ENCODE measurements at regions of chrX and their contacts with region 1.

Region 1: DNA sequence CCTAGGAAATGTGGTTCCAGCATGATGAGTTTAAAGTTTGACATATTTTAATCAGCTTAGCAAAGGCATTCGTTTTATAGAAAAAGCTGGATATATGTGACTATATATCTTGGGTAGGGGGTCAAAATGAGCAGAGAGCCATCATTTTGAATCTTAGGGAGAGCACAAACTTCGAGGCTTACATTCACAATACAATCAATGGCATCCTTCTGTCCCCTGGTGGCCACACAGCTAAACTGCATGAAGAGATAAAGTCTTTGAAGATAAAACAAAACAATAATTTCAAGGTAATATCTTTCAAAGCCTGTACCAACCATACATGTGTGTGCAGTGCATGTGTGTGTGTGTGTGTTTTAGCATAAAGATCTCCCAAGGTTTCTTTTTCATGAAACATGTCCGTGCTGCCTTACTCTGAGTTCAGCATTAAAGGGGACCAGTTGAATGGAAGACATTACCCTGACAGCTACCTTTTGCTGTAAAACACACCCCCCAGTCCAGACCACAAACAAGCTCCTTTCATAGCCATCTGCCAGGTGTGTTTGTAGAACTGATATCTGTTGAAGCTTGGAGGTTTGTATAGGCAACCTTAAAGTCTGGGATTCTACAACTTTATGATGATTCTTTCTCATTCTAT is 22.0 kb downstream of the DYNLT3 start:
- DNase-seq: peak; percentile 5 to 73 (median 46)
- ATAC-seq: peak; percentile 65 to 75 (median 71)
- H3K4me3 ChIP-seq: no peak overlapping the region
- H3K4me3 Mint-ChIP-seq: no peak overlapping the region
- H3K27ac ChIP-seq: no peak overlapping the region
- H3K27ac Mint-ChIP-seq: no peak overlapping the region
- H3K4me1 ChIP-seq: peaks cover 0 to 8% of the 10 kb centered on the region in 2 experiments
- H3K4me1 Mint-ChIP-seq: peaks cover 18 to 31% (median 26%) of the 10 kb centered on the region in 3 donors
- H3K27me3 ChIP-seq: no peaks in the 10 kb centered on the region
- H3K27me3 Mint-ChIP-seq: peaks cover 0 to 4% of the 10 kb centered on the region in 2 donors

Region 2: DNA sequence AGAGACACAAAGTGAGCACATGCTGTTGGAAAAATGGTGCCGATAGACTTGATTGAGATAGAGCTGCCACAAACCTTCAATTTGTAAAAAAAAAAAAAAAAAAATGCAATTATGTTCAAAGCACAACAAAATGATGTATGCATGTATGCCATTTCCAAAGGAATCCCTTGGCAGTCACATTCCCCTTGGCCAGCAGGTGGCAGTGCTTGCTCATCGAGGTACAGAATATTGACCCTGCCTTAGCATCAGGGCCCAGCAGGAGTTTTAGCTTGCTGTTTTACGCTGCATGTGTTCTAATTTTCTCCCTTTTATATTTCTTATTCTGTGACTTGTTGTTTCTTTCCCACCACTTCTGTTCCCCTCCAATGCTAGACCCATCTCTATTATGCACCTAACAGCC is 80.0 kb before region 1 on chrX:
- CTCF ChIA-PET with region 1: interaction called, 49 to 77 read pairs
- POLR2A ChIA-PET with region 1: no interaction called
- DNase-seq: peak; percentile 53 to 84 (median 68)
- ATAC-seq: peak; percentile 70 to 91 (median 79)
- H3K4me3 ChIP-seq: no peak overlapping the region
- H3K4me3 Mint-ChIP-seq: no peak overlapping the region
- H3K27ac ChIP-seq: no peak overlapping the region
- H3K27ac Mint-ChIP-seq: no peak overlapping the region
- H3K4me1 ChIP-seq: peaks cover 7 to 12% of the 10 kb centered on the region in 2 experiments
- H3K4me1 Mint-ChIP-seq: peaks cover 9 to 16% (median 11%) of the 10 kb centered on the region in 3 donors
- H3K27me3 ChIP-seq: no peaks in the 10 kb centered on the region
- H3K27me3 Mint-ChIP-seq: peaks cover 0 to 13% of the 10 kb centered on the region in 2 donors

Region 3: DNA sequence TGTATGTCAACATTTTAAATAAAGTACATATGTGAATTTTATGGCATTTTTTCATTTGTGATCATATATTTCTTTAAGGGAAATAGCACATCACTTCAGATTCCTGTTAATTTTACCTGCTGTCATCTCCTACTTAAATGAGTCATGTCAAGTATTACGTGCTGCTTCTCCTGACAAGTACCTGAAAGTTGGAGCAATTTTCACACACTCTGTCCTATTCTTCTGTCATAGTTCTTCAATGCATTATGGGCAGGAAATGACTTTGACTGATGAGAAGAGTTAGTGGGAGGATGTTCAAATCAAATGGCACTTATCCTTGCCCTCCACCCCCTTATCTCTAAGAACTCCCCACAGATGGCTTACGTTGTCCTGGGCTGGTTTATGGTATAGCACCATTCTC is 116.8 kb after region 1 on chrX:
- CTCF ChIA-PET with region 1: no interaction called
- POLR2A ChIA-PET with region 1: no interaction called
- DNase-seq: no peak
- ATAC-seq: no peak
- H3K4me3 ChIP-seq: no peak overlapping the region
- H3K4me3 Mint-ChIP-seq: no peak overlapping the region
- H3K27ac ChIP-seq: no peak overlapping the region
- H3K27ac Mint-ChIP-seq: no peak overlapping the region
- H3K4me1 ChIP-seq: no peaks in the 10 kb centered on the region
- H3K4me1 Mint-ChIP-seq: no peaks in the 10 kb centered on the region
- H3K27me3 ChIP-seq: no peaks in the 10 kb centered on the region
- H3K27me3 Mint-ChIP-seq: peaks cover 3 to 17% of the 10 kb centered on the region in 2 donors